WTC11 (cell line): ENCODE measurements at regions of chr14 and their contacts with region 1.

Region 1: GRCh38 chr14:72516936-72517700 is 376.8 kb downstream of the DPF3 start:
- DNase-seq: peak; percentile 75
- ATAC-seq: peak; percentile 74
- H3K4me3 Mint-ChIP-seq: no peak overlapping the region
- H3K27ac Mint-ChIP-seq: no peak overlapping the region
- H3K4me1 Mint-ChIP-seq: peaks cover 3% of the 10 kb centered on the region; the same call in 1 of the 2 replicates
- H3K27me3 Mint-ChIP-seq: no peaks in the 10 kb centered on the region
- CTCF ChIP-seq: peak; percentile 60; the same call in 1 of the 2 replicates

Region 2: GRCh38 chr14:72539661-72540315 is 22.7 kb after region 1 on chr14:
- CTCF ChIA-PET with region 1: interaction called, 24 read pairs
- POLR2A ChIA-PET with region 1: no interaction called
- DNase-seq: no peak
- ATAC-seq: no peak
- H3K4me3 Mint-ChIP-seq: no peak overlapping the region
- H3K27ac Mint-ChIP-seq: no peak overlapping the region
- H3K4me1 Mint-ChIP-seq: peaks cover 16% of the 10 kb centered on the region
- H3K27me3 Mint-ChIP-seq: no peaks in the 10 kb centered on the region; the same call in 1 of the 2 replicates
- CTCF ChIP-seq: no peak

Region 3: GRCh38 chr14:72605096-72605920 is 88.2 kb after region 1 on chr14:
- CTCF ChIA-PET with region 1: no interaction called
- POLR2A ChIA-PET with region 1: no interaction called
- DNase-seq: no peak
- ATAC-seq: no peak
- H3K4me3 Mint-ChIP-seq: no peak overlapping the region
- H3K27ac Mint-ChIP-seq: no peak overlapping the region
- H3K4me1 Mint-ChIP-seq: peaks cover 24% of the 10 kb centered on the region
- H3K27me3 Mint-ChIP-seq: no peaks in the 10 kb centered on the region; the same call in 1 of the 2 replicates
- CTCF ChIP-seq: no peak

Region 4: DNA sequence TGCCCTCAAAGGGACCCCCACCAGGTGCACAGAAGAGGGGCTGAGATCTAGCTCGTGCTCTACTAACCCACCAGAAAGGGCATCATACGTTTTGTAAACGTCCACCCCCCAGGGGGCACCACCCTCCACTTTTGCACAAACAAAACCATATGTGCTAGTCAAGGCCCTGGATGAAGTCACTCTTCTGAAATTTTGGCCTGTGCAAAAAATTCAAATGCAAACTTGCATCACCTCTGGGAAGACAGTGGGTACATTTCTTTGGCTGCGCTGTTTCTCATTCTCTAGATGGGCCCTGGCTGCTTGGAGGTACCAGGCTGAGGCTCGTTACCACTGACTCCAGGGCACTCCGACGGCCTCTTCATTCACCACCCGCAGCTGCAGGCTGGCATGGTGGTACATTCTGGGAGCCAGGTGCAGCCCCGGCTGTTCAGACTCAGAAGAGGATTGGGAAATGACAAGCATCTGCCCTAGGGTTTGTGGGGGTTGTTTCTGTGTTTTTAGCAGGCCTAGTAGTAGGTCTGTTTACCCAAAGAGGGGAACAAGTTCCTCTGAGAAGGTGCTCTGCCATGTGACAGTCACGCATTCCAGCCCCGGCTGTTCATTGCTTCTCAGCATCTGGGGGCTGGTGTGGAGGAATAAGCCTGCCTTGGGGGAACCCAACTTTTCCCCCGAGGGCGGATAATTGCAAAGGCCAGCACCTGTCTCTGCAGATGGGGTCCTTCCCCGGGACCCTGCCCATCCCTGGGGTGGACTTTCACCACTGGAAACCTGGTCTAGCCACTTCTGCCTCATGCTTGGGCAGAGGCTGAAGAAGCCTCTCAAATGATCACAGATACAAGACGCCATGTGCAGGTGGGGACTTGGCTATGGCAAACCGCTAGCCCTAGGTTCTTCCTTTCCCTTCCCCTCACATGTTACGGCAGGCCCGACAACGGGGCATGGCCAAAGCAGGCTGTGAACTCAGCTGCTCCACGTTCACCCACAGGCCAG is 229.2 kb after region 1 on chr14:
- CTCF ChIA-PET with region 1: no interaction called
- POLR2A ChIA-PET with region 1: no interaction called
- DNase-seq: no peak
- ATAC-seq: no peak
- H3K4me3 Mint-ChIP-seq: no peak overlapping the region
- H3K27ac Mint-ChIP-seq: no peak overlapping the region
- H3K4me1 Mint-ChIP-seq: peaks cover 13% of the 10 kb centered on the region
- H3K27me3 Mint-ChIP-seq: no peaks in the 10 kb centered on the region; the same call in none of the 2 replicates
- CTCF ChIP-seq: no peak

Region 5: GRCh38 chr14:72758420-72758819 is 241.3 kb after region 1 on chr14:
- CTCF ChIA-PET with region 1: interaction called, 14 read pairs
- POLR2A ChIA-PET with region 1: no interaction called
- DNase-seq: peak; percentile 22
- ATAC-seq: peak; percentile 87
- H3K4me3 Mint-ChIP-seq: no peak overlapping the region
- H3K27ac Mint-ChIP-seq: no peak overlapping the region
- H3K4me1 Mint-ChIP-seq: no peaks in the 10 kb centered on the region
- H3K27me3 Mint-ChIP-seq: peaks cover 2% of the 10 kb centered on the region; the same call in 1 of the 2 replicates
- CTCF ChIP-seq: peak; percentile 24; the same call in 1 of the 2 replicates

Region 6: GRCh38 chr14:72893636-72894321 is 376.7 kb after region 1 on chr14 and contains the start of gene DPF3:
- CTCF ChIA-PET with region 1: interaction called, 25 read pairs
- POLR2A ChIA-PET with region 1: no interaction called
- DNase-seq: peak; percentile 98
- ATAC-seq: peak; percentile 90
- H3K4me3 Mint-ChIP-seq: peak within 1 kb of the TSS; percentile 92
- H3K27ac Mint-ChIP-seq: no peak within 1 kb of the TSS
- H3K4me1 Mint-ChIP-seq: peaks cover 40% of the 10 kb centered on the region
- H3K27me3 Mint-ChIP-seq: peaks cover 85% of the 10 kb centered on the region
- CTCF ChIP-seq: no peak
- total RNA-seq, gene DPF3: 0.31 to 0.53 TPM (median 0.32 TPM) in 3 replicates

Region 7: GRCh38 chr14:72920015-72920414 is 402.9 kb after region 1 on chr14:
- CTCF ChIA-PET with region 1: interaction called, 10 read pairs
- POLR2A ChIA-PET with region 1: no interaction called
- DNase-seq: no peak
- ATAC-seq: peak; percentile 46; the same call in 1 of the 2 replicates
- H3K4me3 Mint-ChIP-seq: no peak overlapping the region
- H3K27ac Mint-ChIP-seq: no peak overlapping the region
- H3K4me1 Mint-ChIP-seq: no peaks in the 10 kb centered on the region
- H3K27me3 Mint-ChIP-seq: peaks cover 11% of the 10 kb centered on the region
- CTCF ChIP-seq: no peak